ENCODE measurements at regions of chr6 and their contacts with region 1.

Region 1: GRCh38 chr6:170306324-170307079 is at the start of gene FAM120B:
- DNase-seq: peak; percentile 93
- ATAC-seq: peak; percentile 98
- H3K4me3 ChIP-seq: peak within 1 kb of the TSS; percentile 75
- H3K27ac ChIP-seq: peak within 1 kb of the TSS; percentile 67
- H3K4me1 ChIP-seq: peaks cover 10% of the 10 kb centered on the region
- H3K27me3 ChIP-seq: no peaks in the 10 kb centered on the region
- CTCF ChIP-seq: no peak
- POLR2A ChIP-seq: peak; percentile 91
- RAD21 ChIP-seq: no peak
- total RNA-seq, gene FAM120B: 20.8 and 28.0 TPM in 2 replicates

Region 2: GRCh38 chr6:170209572-170210351 is 96.7 kb before region 1 on chr6:
- CTCF ChIA-PET with region 1: no interaction called
- POLR2A ChIA-PET with region 1: no interaction called
- dilution Hi-C with region 1: no loop called
- in situ Hi-C with region 1: no loop called
- intact Hi-C with region 1: no loop called
- DNase-seq: no peak
- ATAC-seq: no peak
- H3K4me3 ChIP-seq: no peak overlapping the region
- H3K27ac ChIP-seq: no peak overlapping the region
- H3K4me1 ChIP-seq: no peaks in the 10 kb centered on the region
- H3K27me3 ChIP-seq: no peaks in the 10 kb centered on the region
- CTCF ChIP-seq: no peak
- POLR2A ChIP-seq: no peak
- RAD21 ChIP-seq: no peak

Region 3: DNA sequence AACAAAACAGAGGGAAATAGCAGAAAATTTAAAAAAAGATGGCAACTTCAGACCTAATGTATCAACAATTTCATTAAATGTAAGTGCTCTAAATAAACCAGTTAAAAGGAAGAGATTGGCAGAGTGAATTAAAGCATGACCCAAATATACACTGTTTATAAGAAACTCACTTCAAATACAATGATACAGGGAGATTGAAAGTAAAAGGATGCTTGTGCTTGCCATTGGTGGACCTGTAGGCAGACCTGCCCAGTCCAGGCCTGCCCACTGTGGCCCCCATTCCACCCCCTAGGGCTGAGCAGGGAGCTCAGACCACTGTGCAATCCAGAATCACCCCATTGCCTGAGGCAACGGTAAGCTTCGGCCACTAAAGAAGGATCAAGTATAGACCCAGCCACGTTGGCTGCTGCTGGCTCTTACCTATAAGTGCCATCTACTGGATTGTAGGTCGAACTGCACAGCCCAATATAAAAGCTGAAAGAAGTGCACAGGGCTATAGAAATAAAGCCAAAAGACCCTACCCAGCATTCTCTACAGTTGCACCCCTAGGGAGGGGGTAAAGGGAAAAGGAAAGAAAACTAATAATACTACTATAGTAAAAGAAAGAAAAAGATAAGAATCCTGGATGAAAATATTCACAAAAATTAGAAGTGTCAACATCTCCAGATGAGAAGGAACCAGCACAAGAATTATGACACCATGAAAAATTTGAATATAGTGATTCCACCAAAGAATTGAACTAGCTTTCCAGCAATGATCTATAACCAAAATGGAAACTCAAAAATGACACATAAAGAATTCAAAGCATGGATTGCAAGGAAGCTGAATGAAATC is 210.5 kb after region 1 on chr6:
- CTCF ChIA-PET with region 1: interaction called, 3 read pairs
- POLR2A ChIA-PET with region 1: no interaction called
- dilution Hi-C with region 1: no loop called
- in situ Hi-C with region 1: no loop called
- intact Hi-C with region 1: loop called (anchors 5 kb)
- DNase-seq: peak; percentile 78
- ATAC-seq: peak; percentile 100
- H3K4me3 ChIP-seq: no peak overlapping the region
- H3K27ac ChIP-seq: no peak overlapping the region
- H3K4me1 ChIP-seq: no peaks in the 10 kb centered on the region
- H3K27me3 ChIP-seq: peaks cover 3% of the 10 kb centered on the region
- CTCF ChIP-seq: peak; percentile 79
- POLR2A ChIP-seq: no peak
- RAD21 ChIP-seq: peak; percentile 94

Measured in IMR-90 (cell line).